ENCODE measurements at regions of chr2 and their contacts with region 1.

Region 1: DNA sequence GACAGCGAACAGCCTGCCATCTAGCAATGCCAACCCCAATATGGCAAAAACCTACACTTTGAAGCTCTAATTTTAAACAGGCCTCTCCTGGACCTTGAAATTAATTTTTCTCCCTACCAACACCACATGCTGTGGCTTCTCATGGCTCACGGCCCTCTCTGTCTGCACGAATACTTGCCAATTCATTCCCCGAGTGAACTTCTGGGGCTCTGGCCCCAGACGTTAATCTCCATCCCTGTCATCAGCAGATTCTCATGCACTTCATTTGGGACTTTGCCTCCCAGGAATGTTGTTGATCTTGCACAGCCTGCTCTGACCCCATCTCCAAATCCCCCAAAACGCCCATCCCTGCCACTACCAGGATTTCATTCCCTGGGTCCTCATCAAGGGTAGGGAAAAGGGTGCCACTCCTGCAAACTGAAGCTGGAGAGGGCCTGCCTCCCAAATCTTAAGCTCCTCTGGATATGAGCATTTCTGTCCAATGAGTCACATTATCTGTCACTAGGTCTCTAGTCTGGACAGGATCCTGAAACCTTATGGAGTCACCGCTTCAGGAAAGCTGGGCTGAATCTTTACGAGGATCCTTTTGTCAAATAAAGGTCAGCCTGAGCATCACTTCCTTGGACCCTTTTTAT is 10.4 kb downstream of the FIGLA start:
- DNase-seq: no peak
- ATAC-seq: no peak
- H3K4me3 Mint-ChIP-seq: no peak overlapping the region
- H3K27ac Mint-ChIP-seq: no peak overlapping the region
- H3K4me1 Mint-ChIP-seq: no peaks in the 10 kb centered on the region
- H3K27me3 Mint-ChIP-seq: peaks cover 29% of the 10 kb centered on the region

Region 2: DNA sequence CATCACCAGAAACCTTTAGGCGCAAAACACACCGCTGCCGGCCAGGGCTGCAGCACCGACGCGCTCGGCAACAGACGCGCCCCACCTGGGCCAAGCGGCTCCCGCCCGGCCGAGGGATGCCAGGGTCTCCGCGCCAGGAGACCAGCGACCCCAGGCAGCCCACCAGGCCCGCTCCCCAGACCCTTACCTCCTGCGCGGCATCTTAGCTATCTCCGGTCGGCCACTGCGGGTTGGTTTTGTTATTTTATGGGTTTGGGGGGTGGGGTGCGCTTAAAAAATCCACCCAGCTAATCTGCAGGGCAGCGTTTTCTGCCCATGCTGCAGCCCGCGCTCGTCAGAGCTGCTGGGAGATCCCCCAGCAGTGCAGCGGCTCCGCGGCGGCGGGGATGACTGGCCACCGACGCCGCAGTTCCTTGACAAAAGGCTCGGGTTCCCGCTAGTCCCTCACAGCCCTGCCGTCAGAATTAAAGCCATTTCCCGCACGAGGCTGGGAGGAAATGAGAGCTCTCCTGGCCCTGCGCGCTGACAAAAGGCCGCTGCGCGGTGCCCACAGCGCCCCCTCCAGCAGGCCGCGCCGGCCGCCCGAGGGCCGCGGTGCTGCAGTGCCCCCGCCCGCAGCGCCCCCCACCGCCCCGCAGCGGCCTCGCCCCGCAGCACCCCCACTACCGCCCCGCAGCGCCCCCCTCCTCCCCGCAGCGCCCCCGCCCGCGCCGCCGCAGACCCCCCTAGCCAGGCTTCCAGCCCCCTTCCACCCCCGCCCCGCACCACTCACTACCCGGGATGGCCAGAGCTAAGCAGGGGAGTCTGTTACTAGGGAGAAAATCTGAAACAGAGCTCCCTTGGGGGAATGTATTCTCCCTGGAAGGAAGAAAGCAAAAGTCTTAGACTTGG is 12.1 kb before region 1 on chr2 and contains the start of gene ADD2:
- CTCF ChIA-PET with region 1: interaction called, 14 read pairs
- POLR2A ChIA-PET with region 1: no interaction called
- DNase-seq: peak; percentile 63
- ATAC-seq: peak; percentile 77
- H3K4me3 Mint-ChIP-seq: peak within 1 kb of the TSS; percentile 80
- H3K27ac Mint-ChIP-seq: peak within 1 kb of the TSS; percentile 73
- H3K4me1 Mint-ChIP-seq: peaks cover 12% of the 10 kb centered on the region
- H3K27me3 Mint-ChIP-seq: peaks cover 47% of the 10 kb centered on the region
- total RNA-seq, gene ADD2: 12.8 to 14.2 TPM

Measured in activated CD8-positive, alpha-beta T cell treated with anti-CD3 and anti-CD28 coated beads, Interleukin-2, amount 10 ng/mL, durations not matched to agents 7 days and 5 days (primary cell).